Common myeloid progenitor, CD34-positive (primary cell): ENCODE measurements at regions of chr1 and their contacts with region 1.

Region 1: DNA sequence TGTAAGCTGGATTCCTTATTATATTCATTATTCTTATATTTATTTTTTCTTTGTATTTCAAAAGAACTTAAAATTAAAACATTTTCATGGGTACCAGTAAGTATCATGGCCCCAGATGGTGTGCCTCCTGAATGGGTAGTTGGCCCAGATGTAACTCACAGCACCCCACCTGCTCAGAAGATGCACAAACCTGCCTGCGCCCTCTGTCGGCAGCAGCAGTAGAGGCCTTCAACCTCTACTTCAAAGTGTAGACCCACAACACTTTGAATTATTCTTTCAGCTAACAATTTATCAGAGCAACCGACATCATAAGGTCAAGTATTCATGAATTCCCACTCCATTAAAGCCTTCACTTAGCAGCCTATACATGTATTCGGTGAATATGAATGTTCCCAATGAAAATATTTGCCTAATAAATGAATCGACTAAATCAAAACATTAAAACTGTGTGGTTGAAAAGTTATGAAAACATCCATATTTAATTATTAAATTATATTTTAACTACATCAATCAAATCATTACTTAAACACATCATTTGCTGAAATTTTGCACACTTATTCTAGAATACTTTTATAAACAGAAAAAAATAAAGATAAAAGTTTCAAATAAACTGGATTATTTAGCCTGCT is 25.4 kb downstream of the PIGM start:
- DNase-seq: peak; percentile 81 to 90 (median 89)
- H3K4me3 ChIP-seq: no peak overlapping the region
- H3K27ac ChIP-seq: no peak overlapping the region
- H3K4me1 ChIP-seq: no peaks in the 10 kb centered on the region
- H3K27me3 ChIP-seq: no peaks in the 10 kb centered on the region

Region 2: GRCh38 chr1:159752135-159752580 is 254.3 kb before region 1 on chr1:
- CTCF ChIA-PET with region 1: no interaction called
- POLR2A ChIA-PET with region 1: no interaction called
- DNase-seq: no peak
- H3K4me3 ChIP-seq: no peak overlapping the region
- H3K27ac ChIP-seq: no peak overlapping the region
- H3K4me1 ChIP-seq: peaks cover 3 to 26% (median 11%) of the 10 kb centered on the region in 4 experiments
- H3K27me3 ChIP-seq: no peaks in the 10 kb centered on the region

Region 3: DNA sequence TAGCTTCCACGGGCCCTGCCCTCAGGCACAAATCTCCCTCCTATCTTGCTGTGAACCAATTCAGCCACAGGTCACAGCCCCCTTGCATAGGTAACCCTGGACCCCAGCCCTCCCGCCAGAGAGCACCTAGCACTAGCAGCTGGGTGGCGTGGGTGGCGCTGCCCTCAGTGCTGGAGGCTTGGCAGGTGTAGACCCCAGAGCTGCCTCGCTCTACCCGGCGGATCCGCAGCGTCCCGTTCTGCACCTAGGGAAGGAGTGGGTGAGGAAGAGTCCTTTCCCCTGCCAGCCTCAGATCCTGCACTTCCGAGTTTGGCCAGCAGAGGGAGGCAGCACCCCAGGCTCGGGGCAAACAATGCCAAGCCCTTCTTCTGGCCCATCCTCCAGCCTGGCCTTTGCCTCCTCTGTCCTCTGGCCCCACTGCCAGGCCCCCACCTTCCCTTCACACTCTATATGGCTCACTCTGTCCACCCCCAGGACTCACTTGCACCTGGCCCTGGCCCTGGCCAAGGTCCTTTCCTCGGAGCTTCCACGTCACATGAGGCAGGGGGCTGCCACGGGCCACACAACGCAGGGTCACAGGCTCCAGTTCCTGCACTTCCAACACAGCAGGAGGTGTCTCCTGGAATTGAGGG is 70.0 kb before region 1 on chr1:
- CTCF ChIA-PET with region 1: interaction called, 108 read pairs
- POLR2A ChIA-PET with region 1: no interaction called
- DNase-seq: peak; percentile 56 to 74 (median 66)
- H3K4me3 ChIP-seq: peak overlapping the region in 1 of 7 experiments; percentile 74
- H3K27ac ChIP-seq: no peak overlapping the region
- H3K4me1 ChIP-seq: peaks cover 8 to 37% (median 23%) of the 10 kb centered on the region in 4 experiments
- H3K27me3 ChIP-seq: no peaks in the 10 kb centered on the region

Region 4: DNA sequence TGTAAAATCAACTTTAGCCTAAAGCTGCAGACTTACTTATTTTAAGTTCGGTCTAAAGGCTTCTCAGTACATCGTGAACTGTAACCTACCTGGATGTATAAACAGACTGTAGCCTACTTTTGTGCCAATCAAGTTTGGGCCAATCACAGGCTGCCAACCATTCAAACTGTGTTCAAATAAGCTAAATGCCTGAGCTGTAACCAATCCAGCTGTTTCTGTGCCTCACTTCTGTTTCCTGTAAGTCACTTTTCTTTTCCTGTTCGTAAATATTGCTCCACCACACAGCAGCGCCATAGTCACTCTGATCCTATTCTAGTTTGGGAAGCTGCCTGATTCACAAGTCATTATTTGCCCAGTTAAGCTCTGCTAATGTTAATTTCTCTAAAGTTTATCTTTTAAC is 14.9 kb before region 1 on chr1:
- CTCF ChIA-PET with region 1: interaction called, 18 read pairs
- POLR2A ChIA-PET with region 1: no interaction called
- DNase-seq: peak; percentile 69 to 80 (median 73)
- H3K4me3 ChIP-seq: no peak overlapping the region
- H3K27ac ChIP-seq: no peak overlapping the region
- H3K4me1 ChIP-seq: peaks cover 0 to 8% (median 6%) of the 10 kb centered on the region in 4 experiments
- H3K27me3 ChIP-seq: no peaks in the 10 kb centered on the region

Region 5: GRCh38 chr1:160031365-160032164 is 25.1 kb after region 1 on chr1 and contains the start of gene PIGM:
- CTCF ChIA-PET with region 1: interaction called, 30 read pairs
- POLR2A ChIA-PET with region 1: no interaction called
- DNase-seq: peak; percentile 89 to 92 (median 91)
- H3K4me3 ChIP-seq: peak within 1 kb of the TSS; percentile 61 to 95 (median 89)
- H3K27ac ChIP-seq: peak within 1 kb of the TSS in 1 of 2 experiments; percentile 39
- H3K4me1 ChIP-seq: peaks cover 10 to 34% (median 24%) of the 10 kb centered on the region in 4 experiments
- H3K27me3 ChIP-seq: no peaks in the 10 kb centered on the region

Region 6: DNA sequence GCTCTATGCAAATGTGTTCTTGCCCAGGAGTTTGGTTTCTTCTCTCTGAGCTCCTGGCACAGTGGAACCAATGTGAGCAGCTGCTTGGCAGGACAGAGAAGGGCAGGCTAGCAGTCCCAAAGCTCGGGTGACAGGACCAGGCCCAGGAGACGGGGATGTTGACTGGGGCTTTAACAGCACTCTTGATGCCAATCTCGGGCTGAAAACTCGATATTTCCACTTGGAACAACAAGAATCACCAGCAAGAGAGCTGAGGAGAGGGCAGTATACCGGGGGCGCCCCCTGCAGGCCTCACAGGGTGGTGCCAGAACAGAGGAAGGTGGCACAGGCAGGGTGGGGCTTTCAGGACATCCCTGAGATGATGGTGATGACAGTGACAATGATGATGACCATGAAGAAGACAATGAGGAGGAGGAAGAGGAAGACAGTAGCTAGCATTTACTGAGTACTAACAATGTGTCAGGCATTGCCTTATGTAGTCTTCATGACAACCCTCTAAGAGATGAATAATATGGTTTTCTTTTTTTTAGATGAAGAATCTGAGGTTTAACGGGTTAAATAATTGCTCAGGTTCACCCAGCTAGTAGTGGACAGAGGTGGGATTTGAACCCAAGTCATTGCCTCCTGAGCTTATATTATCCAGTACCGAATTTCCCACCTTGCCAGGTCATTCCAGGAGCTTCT is 72.2 kb after region 1 on chr1:
- CTCF ChIA-PET with region 1: interaction called, 15 read pairs
- POLR2A ChIA-PET with region 1: no interaction called
- DNase-seq: peak; percentile 47 to 65 (median 60)
- H3K4me3 ChIP-seq: no peak overlapping the region
- H3K27ac ChIP-seq: no peak overlapping the region
- H3K4me1 ChIP-seq: peaks cover 0 to 3% (median under 1%) of the 10 kb centered on the region in 4 experiments
- H3K27me3 ChIP-seq: peaks cover 9 to 50% (median 38%) of the 10 kb centered on the region in 5 experiments